Endothelial cell of umbilical vein (primary cell): ENCODE measurements at regions of chr20 and their contacts with region 1.

Region 1: DNA sequence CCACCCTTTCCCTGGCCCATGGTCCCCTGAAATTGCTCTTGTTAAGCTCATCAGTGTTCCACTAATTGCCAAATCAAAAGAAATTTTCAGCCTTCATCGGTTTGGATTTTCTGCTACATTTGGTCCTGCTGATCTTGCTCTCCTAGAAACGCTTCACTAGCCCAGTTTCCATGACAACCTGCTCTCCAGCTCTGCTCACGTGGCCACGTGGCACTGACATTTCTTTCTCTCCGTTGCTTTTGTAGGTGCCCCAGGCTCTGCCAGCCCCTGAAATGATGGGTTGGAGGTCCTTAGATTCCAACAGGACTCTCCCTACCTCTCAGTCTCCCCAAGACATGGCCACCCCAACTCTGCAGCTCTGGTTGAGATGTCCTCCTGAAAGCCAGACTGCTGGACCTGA is 45.8 kb upstream of the NNAT start:
- DNase-seq: no peak
- H3K4me3 ChIP-seq: no peak overlapping the region
- H3K27ac ChIP-seq: no peak overlapping the region
- H3K4me1 ChIP-seq: no peaks in the 10 kb centered on the region
- H3K27me3 ChIP-seq: peaks cover 9 to 12% of the 10 kb centered on the region in 2 experiments
- CTCF ChIP-seq: no peak
- POLR2A ChIP-seq: no peak

Region 2: DNA sequence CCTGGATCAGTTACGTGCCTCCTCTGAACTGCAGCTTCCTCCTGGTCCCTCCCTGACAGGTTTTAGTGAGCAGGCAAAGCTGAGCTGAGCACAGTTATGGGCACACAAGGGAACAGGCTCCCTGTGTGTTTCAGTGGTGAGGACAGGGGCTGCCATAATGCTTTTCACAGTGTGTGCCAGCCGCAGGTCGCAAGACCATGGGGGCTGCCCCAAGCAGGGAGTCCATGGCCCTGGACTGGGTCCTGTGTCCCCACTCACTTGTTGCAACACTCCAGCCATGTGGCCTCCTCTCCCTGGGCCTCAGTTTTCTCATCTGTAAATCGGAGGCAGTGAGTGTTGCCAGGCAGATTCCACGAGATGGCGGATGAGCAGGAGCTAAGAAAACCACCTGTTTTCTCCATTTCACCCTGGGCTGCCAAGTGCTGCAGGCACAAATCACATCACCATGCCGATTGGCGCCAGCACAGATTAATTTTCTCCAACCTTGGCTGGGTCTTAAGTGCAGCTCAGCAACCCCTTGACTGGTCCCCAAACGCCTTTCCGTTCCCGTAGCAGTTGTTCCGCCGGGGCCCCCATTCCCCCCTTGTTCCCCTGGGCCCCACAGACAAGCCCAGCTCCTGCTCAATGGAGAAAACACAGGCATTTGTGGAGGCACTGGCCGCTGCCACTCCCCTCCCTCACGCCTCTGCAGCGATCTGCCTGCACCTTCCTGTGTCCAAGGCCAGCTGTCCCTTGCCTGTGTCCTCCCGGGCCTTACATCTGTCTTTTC is 11.3 kb before region 1 on chr20:
- CTCF ChIA-PET with region 1: interaction called, 4 read pairs
- POLR2A ChIA-PET with region 1: no interaction called
- dilution Hi-C with region 1: no loop called
- intact Hi-C with region 1: loop called (anchors 1 kb)
- DNase-seq: no peak
- H3K4me3 ChIP-seq: no peak overlapping the region
- H3K27ac ChIP-seq: no peak overlapping the region
- H3K4me1 ChIP-seq: no peaks in the 10 kb centered on the region
- H3K27me3 ChIP-seq: peaks cover 19 to 23% of the 10 kb centered on the region in 2 experiments
- CTCF ChIP-seq: no peak
- POLR2A ChIP-seq: no peak

Region 3: GRCh38 chr20:37615340-37616109 is 140.3 kb after region 1 on chr20:
- CTCF ChIA-PET with region 1: no interaction called
- POLR2A ChIA-PET with region 1: no interaction called
- dilution Hi-C with region 1: no loop called
- intact Hi-C with region 1: no loop called
- DNase-seq: peak; percentile 33
- H3K4me3 ChIP-seq: no peak overlapping the region
- H3K27ac ChIP-seq: no peak overlapping the region
- H3K4me1 ChIP-seq: no peaks in the 10 kb centered on the region
- H3K27me3 ChIP-seq: peaks cover 4 to 5% of the 10 kb centered on the region in 2 experiments
- CTCF ChIP-seq: peak; percentile 59 to 65
- POLR2A ChIP-seq: no peak